ENCODE measurements at regions of chr14 and their contacts with region 1.

Region 1: DNA sequence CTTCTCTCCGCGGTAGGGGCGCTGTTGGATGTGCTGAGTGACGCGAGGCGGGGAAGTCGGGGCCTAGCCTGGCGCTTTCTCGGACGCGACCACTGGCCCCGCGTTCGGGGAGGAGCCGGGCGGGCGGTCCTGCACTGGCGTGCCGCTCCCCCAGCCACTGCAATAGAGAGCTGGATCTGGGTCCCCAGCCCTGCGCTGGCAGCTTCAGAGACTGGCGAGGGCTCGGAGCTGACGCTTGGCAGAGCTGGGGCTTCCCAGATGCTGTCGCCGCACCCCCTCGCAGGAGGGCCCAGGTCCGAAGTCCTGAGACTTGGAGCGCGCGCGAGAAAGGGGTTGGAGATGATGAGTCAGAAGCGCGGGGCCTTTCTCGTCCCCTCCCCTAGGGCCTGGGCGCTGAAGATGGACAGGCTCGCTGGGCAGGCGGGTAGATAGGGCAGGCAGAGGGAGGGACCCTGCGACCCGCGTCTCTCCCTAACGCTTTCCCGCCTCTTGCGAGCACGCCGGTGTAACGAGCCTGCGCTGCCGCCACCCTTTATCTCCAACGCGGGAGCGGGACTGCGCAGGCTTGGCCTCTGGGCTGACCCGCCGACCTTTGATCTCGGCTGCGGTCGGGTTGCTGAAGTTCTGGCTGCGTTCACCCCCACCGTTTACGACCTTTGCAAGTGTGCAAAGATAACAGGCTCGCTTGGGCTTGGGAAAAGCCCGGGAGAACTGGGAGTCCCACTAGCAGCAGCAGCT is 3.0 kb downstream of the TMEM253 start:
- DNase-seq: peak; percentile 87 to 95 (median 91)
- H3K4me3 ChIP-seq: peak overlapping the region; percentile 99
- H3K4me3 Mint-ChIP-seq: peak overlapping the region; percentile 79 to 96 (median 88)
- H3K27ac ChIP-seq: peak overlapping the region; percentile 98
- H3K27ac Mint-ChIP-seq: peak overlapping the region; percentile 82 to 99 (median 93)
- H3K4me1 ChIP-seq: peaks cover 22% of the 10 kb centered on the region
- H3K4me1 Mint-ChIP-seq: peaks cover 19 to 31% (median 22%) of the 10 kb centered on the region in 3 donors
- H3K27me3 ChIP-seq: no peaks in the 10 kb centered on the region
- H3K27me3 Mint-ChIP-seq: peaks cover 11% of the 10 kb centered on the region in 2 donors

Region 2: DNA sequence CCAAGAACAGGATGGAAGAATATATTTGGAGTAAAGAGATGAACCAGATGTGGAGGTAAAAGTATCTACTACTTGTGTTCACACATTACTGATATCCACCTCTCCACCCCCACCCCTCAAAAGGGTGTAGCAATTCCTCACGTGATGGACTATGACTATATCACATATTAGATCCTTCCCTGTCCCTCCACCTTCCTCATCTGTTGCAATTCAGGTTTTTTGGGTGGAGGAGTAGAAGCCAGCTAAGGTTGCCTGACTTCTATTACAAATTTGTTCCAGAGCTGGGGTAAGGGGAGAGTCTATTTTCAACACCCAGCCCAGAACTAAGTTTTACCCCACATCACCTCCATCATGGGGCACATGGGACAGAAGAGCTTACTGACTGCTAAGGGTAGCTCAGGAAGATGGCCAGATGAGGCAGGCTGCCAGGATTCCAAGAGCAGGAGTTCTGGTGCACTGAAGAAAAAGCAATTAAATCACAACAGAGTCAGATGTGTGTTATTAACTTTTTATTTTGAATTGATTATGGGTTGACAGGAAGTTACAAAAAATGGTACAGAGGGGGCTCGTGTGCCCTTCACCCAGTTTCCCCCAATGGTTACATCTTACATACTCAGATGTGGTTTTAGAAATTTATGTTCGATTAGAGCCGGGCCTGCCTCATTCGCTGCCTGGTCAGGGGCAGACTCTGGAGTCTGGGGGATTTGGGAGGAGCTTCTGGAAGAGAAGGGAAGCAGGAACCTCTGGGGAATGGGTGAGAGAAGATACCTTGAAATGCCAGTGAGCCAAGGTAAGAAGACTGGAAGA is 71.3 kb before region 1 on chr14:
- CTCF ChIA-PET with region 1: interaction called, 12 read pairs
- POLR2A ChIA-PET with region 1: no interaction called
- DNase-seq: no peak
- H3K4me3 ChIP-seq: no peak overlapping the region
- H3K4me3 Mint-ChIP-seq: no peak overlapping the region
- H3K27ac ChIP-seq: no peak overlapping the region
- H3K27ac Mint-ChIP-seq: no peak overlapping the region
- H3K4me1 ChIP-seq: no peaks in the 10 kb centered on the region
- H3K4me1 Mint-ChIP-seq: no peaks in the 10 kb centered on the region
- H3K27me3 ChIP-seq: no peaks in the 10 kb centered on the region
- H3K27me3 Mint-ChIP-seq: peaks cover 0 to 2% of the 10 kb centered on the region in 2 donors

Region 3: GRCh38 chr14:21039585-21040369 is 64.1 kb before region 1 on chr14:
- CTCF ChIA-PET with region 1: interaction called, 10 read pairs
- POLR2A ChIA-PET with region 1: no interaction called
- DNase-seq: peak in 3 of 5 donors; percentile 24 to 53 (median 53)
- H3K4me3 ChIP-seq: no peak overlapping the region
- H3K4me3 Mint-ChIP-seq: no peak overlapping the region
- H3K27ac ChIP-seq: no peak overlapping the region
- H3K27ac Mint-ChIP-seq: no peak overlapping the region
- H3K4me1 ChIP-seq: peaks cover 6% of the 10 kb centered on the region
- H3K4me1 Mint-ChIP-seq: peaks cover 6 to 8% (median 8%) of the 10 kb centered on the region in 3 donors
- H3K27me3 ChIP-seq: no peaks in the 10 kb centered on the region
- H3K27me3 Mint-ChIP-seq: peaks cover 12 to 30% of the 10 kb centered on the region in 2 donors

Region 4: GRCh38 chr14:21092273-21093011 is 11.4 kb before region 1 on chr14:
- CTCF ChIA-PET with region 1: interaction called, 195 read pairs
- POLR2A ChIA-PET with region 1: interaction called, 11 read pairs
- DNase-seq: peak; percentile 86 to 93 (median 88)
- H3K4me3 ChIP-seq: no peak overlapping the region
- H3K4me3 Mint-ChIP-seq: no peak overlapping the region
- H3K27ac ChIP-seq: no peak overlapping the region
- H3K27ac Mint-ChIP-seq: peak overlapping the region in 7 of 8 donors; percentile 52 to 94 (median 86)
- H3K4me1 ChIP-seq: peaks cover 9% of the 10 kb centered on the region
- H3K4me1 Mint-ChIP-seq: peaks cover 19 to 34% (median 23%) of the 10 kb centered on the region in 3 donors
- H3K27me3 ChIP-seq: no peaks in the 10 kb centered on the region
- H3K27me3 Mint-ChIP-seq: no peaks in the 10 kb centered on the region

Region 5: DNA sequence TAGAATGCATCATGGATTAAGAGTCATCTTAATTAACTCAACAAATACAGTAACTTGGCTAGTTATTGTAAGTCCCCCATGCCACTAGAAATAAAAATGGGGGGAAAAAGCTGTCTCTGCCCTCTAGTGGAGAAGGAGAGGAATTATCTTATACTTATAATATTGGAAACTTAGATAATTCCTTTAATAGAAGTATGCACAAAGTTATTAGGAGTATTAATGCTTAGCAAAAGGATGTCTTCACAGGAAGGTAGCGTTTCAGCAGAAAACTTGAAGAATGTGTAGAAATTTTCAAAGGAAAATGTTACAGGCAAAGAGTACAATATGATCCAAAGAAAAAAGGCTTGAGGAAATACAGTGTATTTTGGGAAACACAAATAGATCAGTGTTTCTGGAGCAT is 32.1 kb after region 1 on chr14:
- CTCF ChIA-PET with region 1: no interaction called
- POLR2A ChIA-PET with region 1: no interaction called
- DNase-seq: peak in 1 of 5 donors; percentile 5
- H3K4me3 ChIP-seq: no peak overlapping the region
- H3K4me3 Mint-ChIP-seq: no peak overlapping the region
- H3K27ac ChIP-seq: no peak overlapping the region
- H3K27ac Mint-ChIP-seq: peak overlapping the region in 1 of 8 donors; percentile 10
- H3K4me1 ChIP-seq: no peaks in the 10 kb centered on the region
- H3K4me1 Mint-ChIP-seq: no peaks in the 10 kb centered on the region
- H3K27me3 ChIP-seq: no peaks in the 10 kb centered on the region
- H3K27me3 Mint-ChIP-seq: peaks cover 8% of the 10 kb centered on the region in 2 donors